Common myeloid progenitor, CD34-positive (primary cell): ENCODE measurements at regions of chr2 and their contacts with region 1.

Region 1: GRCh38 chr2:85561317-85561979 is at the start of gene GGCX:
- DNase-seq: peak; percentile 96 to 98 (median 98)
- H3K4me3 ChIP-seq: peak within 1 kb of the TSS; percentile 89 to 97 (median 91)
- H3K27ac ChIP-seq: peak within 1 kb of the TSS; percentile 86 to 93
- H3K4me1 ChIP-seq: peaks cover 6 to 25% (median 14%) of the 10 kb centered on the region in 4 experiments
- H3K27me3 ChIP-seq: no peaks in the 10 kb centered on the region

Region 2: GRCh38 chr2:85595301-85596025 is 34.0 kb after region 1 on chr2 and contains the start of gene RNF181:
- CTCF ChIA-PET with region 1: interaction called, 3 read pairs
- POLR2A ChIA-PET with region 1: interaction called, 14 read pairs
- DNase-seq: peak; percentile 97 to 98 (median 98)
- H3K4me3 ChIP-seq: peak within 1 kb of the TSS; percentile 89 to 98 (median 95)
- H3K27ac ChIP-seq: peak within 1 kb of the TSS; percentile 87 to 95
- H3K4me1 ChIP-seq: peaks cover 13 to 36% (median 34%) of the 10 kb centered on the region in 4 experiments
- H3K27me3 ChIP-seq: no peaks in the 10 kb centered on the region